Posterior vena cava (tissue), 2 donors: ENCODE measurements at regions of chr21 and their contacts with region 1.

Region 1: DNA sequence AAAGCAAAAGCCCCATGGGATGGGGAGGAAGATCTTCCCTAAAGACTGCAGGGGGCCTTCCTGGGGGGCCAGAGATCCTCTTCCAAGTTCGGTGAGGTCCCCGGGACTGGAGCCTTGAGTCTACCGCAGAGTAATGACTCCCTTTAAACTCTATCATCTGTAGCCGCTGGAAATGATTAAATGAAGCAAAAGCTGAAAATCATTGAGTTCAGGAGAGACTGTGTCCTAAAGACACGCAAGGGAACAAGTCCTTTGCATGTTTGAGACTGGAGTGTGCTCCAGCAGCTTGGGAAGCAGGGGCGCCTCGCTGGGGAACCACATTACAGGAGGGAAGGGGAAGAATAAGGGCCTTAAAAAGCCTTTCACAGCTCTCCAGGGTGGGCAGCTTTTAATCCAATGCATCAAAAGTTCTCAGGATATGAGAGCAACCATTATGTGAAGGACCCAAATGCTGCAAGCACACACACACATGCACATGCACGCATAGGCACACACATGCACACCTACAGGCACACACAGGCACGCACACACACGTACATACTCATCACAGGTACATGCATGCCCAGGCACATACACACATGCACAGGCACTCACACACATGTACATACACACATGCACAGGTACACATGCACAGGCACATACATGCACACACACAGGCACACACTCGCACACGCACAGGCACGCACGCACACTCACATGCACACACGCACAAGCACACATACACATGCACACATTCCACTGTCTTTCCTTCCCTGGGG is 70.0 kb downstream of the WDR4 start:
- DNase-seq: peak; percentile 29

Region 2: GRCh38 chr21:42837421-42838211 is 28.3 kb after region 1 on chr21:
- intact Hi-C with region 1: loop called in 1 of 2 experiments (anchors 1 kb)
- DNase-seq: peak; percentile 72